ENCODE measurements at regions of chr17 and their contacts with region 1.

Region 1: GRCh38 chr17:81484195-81484979 is 28.2 kb downstream of the ACTG1 start:
- DNase-seq: peak; percentile 77 to 95 (median 85)
- ATAC-seq: peak; percentile 75
- H3K4me3 ChIP-seq: peak overlapping the region; percentile 26 to 49
- H3K4me3 Mint-ChIP-seq: peak overlapping the region; percentile 22
- H3K27ac ChIP-seq: no peak overlapping the region
- H3K27ac Mint-ChIP-seq: no peak overlapping the region
- H3K4me1 ChIP-seq: peaks cover 36% of the 10 kb centered on the region
- H3K4me1 Mint-ChIP-seq: peaks cover 16% of the 10 kb centered on the region
- H3K27me3 ChIP-seq: peaks cover 11 to 15% of the 10 kb centered on the region in 2 experiments
- H3K27me3 Mint-ChIP-seq: peaks cover 24% of the 10 kb centered on the region
- CTCF ChIP-seq: peak; percentile 97

Region 2: GRCh38 chr17:81034779-81035388 is 449.5 kb before region 1 on chr17 and contains the start of gene BAIAP2:
- CTCF ChIA-PET with region 1: no interaction called
- POLR2A ChIA-PET with region 1: no interaction called
- intact Hi-C with region 1: loop called in 1 of 2 experiments (anchors 10 kb)
- DNase-seq: peak; percentile 96 to 100 (median 98)
- ATAC-seq: peak; percentile 86
- H3K4me3 ChIP-seq: peak within 1 kb of the TSS; percentile 53 to 60
- H3K4me3 Mint-ChIP-seq: peak within 1 kb of the TSS; percentile 95
- H3K27ac ChIP-seq: peak within 1 kb of the TSS in 1 of 2 experiments; percentile 40
- H3K27ac Mint-ChIP-seq: peak within 1 kb of the TSS; percentile 93
- H3K4me1 ChIP-seq: peaks cover 11% of the 10 kb centered on the region
- H3K4me1 Mint-ChIP-seq: peaks cover 25% of the 10 kb centered on the region
- H3K27me3 ChIP-seq: no peaks in the 10 kb centered on the region
- H3K27me3 Mint-ChIP-seq: no peaks in the 10 kb centered on the region
- CTCF ChIP-seq: no peak
- total RNA-seq, gene BAIAP2: 8.5 to 9.1 TPM

Region 3: GRCh38 chr17:81222906-81223761 is 261.3 kb before region 1 on chr17 and contains the start of gene CEP131:
- CTCF ChIA-PET with region 1: no interaction called
- POLR2A ChIA-PET with region 1: no interaction called
- intact Hi-C with region 1: loop called in 1 of 2 experiments (anchors 1 kb)
- DNase-seq: peak; percentile 99 to 100 (median 99)
- ATAC-seq: peak; percentile 93
- H3K4me3 ChIP-seq: peak within 1 kb of the TSS; percentile 59 to 72
- H3K4me3 Mint-ChIP-seq: peak within 1 kb of the TSS; percentile 83
- H3K27ac ChIP-seq: peak within 1 kb of the TSS in 1 of 2 experiments; percentile 23
- H3K27ac Mint-ChIP-seq: peak within 1 kb of the TSS; percentile 45
- H3K4me1 ChIP-seq: peaks cover 20% of the 10 kb centered on the region
- H3K4me1 Mint-ChIP-seq: peaks cover 19% of the 10 kb centered on the region
- H3K27me3 ChIP-seq: no peaks in the 10 kb centered on the region
- H3K27me3 Mint-ChIP-seq: no peaks in the 10 kb centered on the region
- CTCF ChIP-seq: no peak
- total RNA-seq, gene CEP131: 8.5 to 10.3 TPM

Region 4: DNA sequence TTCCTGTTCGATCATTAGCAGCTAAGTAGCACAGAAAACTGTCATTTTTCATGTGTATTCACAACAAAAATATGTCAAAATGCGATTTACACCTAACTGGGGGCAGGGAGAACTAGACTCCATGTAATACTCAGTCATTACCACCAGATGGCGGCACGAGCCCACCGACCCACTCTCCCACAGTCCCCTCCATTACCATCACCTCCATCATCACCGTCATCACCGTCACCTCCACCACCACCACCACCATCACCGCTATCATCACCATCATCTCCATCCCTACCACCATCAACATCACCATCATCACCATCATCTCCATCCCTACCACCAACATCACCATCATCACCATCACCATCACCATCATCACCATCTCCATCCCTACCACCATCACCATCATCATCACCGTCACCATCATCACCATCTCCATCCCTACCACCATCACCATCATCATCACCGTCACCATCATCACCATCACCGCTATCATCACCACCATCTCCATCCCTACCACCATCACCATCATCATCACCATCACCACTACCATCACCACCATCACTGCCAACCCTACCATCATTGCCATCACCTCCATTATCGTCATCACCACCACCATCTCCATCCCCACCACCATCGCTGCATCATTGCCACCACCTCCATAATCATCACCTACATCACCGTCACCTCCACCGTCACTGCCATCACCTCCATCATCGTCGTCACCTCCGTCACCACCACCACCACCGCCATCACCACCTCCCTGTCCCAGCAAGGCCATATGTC is 230.8 kb before region 1 on chr17:
- CTCF ChIA-PET with region 1: interaction called, 60 read pairs
- POLR2A ChIA-PET with region 1: no interaction called
- intact Hi-C with region 1: loop called in 1 of 2 experiments (anchors 1 kb)
- DNase-seq: peak; percentile 32 to 78 (median 64)
- ATAC-seq: peak; percentile 89
- H3K4me3 ChIP-seq: no peak overlapping the region
- H3K4me3 Mint-ChIP-seq: no peak overlapping the region
- H3K27ac ChIP-seq: no peak overlapping the region
- H3K27ac Mint-ChIP-seq: peak overlapping the region; percentile 52
- H3K4me1 ChIP-seq: peaks cover 8% of the 10 kb centered on the region
- H3K4me1 Mint-ChIP-seq: peaks cover 13% of the 10 kb centered on the region
- H3K27me3 ChIP-seq: no peaks in the 10 kb centered on the region
- H3K27me3 Mint-ChIP-seq: no peaks in the 10 kb centered on the region
- CTCF ChIP-seq: peak; percentile 80

Region 5: GRCh38 chr17:81306898-81307510 is 177.4 kb before region 1 on chr17:
- CTCF ChIA-PET with region 1: no interaction called
- POLR2A ChIA-PET with region 1: no interaction called
- intact Hi-C with region 1: no loop called
- DNase-seq: no peak
- ATAC-seq: no peak
- H3K4me3 ChIP-seq: no peak overlapping the region
- H3K4me3 Mint-ChIP-seq: no peak overlapping the region
- H3K27ac ChIP-seq: no peak overlapping the region
- H3K27ac Mint-ChIP-seq: no peak overlapping the region
- H3K4me1 ChIP-seq: no peaks in the 10 kb centered on the region
- H3K4me1 Mint-ChIP-seq: peaks cover 3% of the 10 kb centered on the region
- H3K27me3 ChIP-seq: peaks cover 0 to 11% of the 10 kb centered on the region in 2 experiments
- H3K27me3 Mint-ChIP-seq: peaks cover 13% of the 10 kb centered on the region
- CTCF ChIP-seq: no peak

Region 6: GRCh38 chr17:81346090-81346907 is 138.1 kb before region 1 on chr17:
- CTCF ChIA-PET with region 1: no interaction called
- POLR2A ChIA-PET with region 1: no interaction called
- intact Hi-C with region 1: loop called in 1 of 2 experiments (anchors 2 kb)
- DNase-seq: peak; percentile 81 to 96 (median 94)
- ATAC-seq: peak; percentile 96
- H3K4me3 ChIP-seq: peak overlapping the region; percentile 43 to 47
- H3K4me3 Mint-ChIP-seq: peak overlapping the region; percentile 63
- H3K27ac ChIP-seq: no peak overlapping the region
- H3K27ac Mint-ChIP-seq: no peak overlapping the region
- H3K4me1 ChIP-seq: peaks cover 34% of the 10 kb centered on the region
- H3K4me1 Mint-ChIP-seq: peaks cover 21% of the 10 kb centered on the region
- H3K27me3 ChIP-seq: peaks cover 34 to 37% of the 10 kb centered on the region in 2 experiments
- H3K27me3 Mint-ChIP-seq: peaks cover 24% of the 10 kb centered on the region
- CTCF ChIP-seq: no peak

Region 7: GRCh38 chr17:81512560-81513371 is 28.4 kb after region 1 on chr17 and contains the start of gene ACTG1:
- CTCF ChIA-PET with region 1: interaction called, 5 read pairs
- POLR2A ChIA-PET with region 1: interaction called, 16 read pairs
- intact Hi-C with region 1: loop called (anchors 1 to 2 kb)
- DNase-seq: peak; percentile 87 to 97 (median 92)
- ATAC-seq: peak; percentile 60
- H3K4me3 ChIP-seq: peak within 1 kb of the TSS; percentile 84 to 93
- H3K4me3 Mint-ChIP-seq: peak within 1 kb of the TSS; percentile 98
- H3K27ac ChIP-seq: peak within 1 kb of the TSS; percentile 56 to 93
- H3K27ac Mint-ChIP-seq: peak within 1 kb of the TSS; percentile 98
- H3K4me1 ChIP-seq: peaks cover 49% of the 10 kb centered on the region
- H3K4me1 Mint-ChIP-seq: peaks cover 57% of the 10 kb centered on the region
- H3K27me3 ChIP-seq: no peaks in the 10 kb centered on the region
- H3K27me3 Mint-ChIP-seq: no peaks in the 10 kb centered on the region
- CTCF ChIP-seq: no peak
- total RNA-seq, gene ACTG1: 1,370 to 1,375 TPM

Region 8: DNA sequence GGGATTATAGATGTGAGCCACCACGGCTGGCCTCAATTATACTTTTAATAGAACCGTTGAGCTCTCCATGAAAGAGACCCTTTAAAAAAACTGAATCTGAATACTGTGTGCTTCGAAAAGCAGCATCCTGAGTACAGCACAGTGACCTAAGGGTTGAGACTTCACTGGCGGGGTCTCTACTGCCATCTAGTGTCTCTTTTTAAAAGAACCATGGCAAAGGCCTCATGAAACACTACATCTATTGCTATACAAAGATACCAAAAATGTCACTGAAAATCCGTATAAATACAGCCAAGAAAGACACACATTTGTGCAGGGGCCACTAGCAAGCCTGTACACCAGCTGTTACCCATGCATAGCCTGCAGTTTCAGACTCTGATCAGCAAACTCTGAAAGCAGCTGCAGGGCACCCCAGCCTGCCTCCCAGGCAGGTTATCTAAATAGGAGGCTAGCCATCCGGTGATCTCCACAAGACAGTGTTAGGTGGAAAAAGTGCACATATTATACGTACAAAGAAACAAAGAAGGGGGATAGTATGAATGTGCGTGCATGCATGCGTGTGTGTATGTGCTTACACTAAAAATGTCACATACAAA is 117.2 kb after region 1 on chr17:
- CTCF ChIA-PET with region 1: interaction called, 14 read pairs
- POLR2A ChIA-PET with region 1: no interaction called
- intact Hi-C with region 1: no loop called
- DNase-seq: peak; percentile 3 to 76 (median 35)
- ATAC-seq: peak; percentile 97
- H3K4me3 ChIP-seq: no peak overlapping the region
- H3K4me3 Mint-ChIP-seq: no peak overlapping the region
- H3K27ac ChIP-seq: no peak overlapping the region
- H3K27ac Mint-ChIP-seq: no peak overlapping the region
- H3K4me1 ChIP-seq: no peaks in the 10 kb centered on the region
- H3K4me1 Mint-ChIP-seq: peaks cover 5% of the 10 kb centered on the region
- H3K27me3 ChIP-seq: no peaks in the 10 kb centered on the region
- H3K27me3 Mint-ChIP-seq: no peaks in the 10 kb centered on the region
- CTCF ChIP-seq: peak; percentile 85